ENCODE measurements at regions of chr9 and their contacts with region 1.

Region 1: DNA sequence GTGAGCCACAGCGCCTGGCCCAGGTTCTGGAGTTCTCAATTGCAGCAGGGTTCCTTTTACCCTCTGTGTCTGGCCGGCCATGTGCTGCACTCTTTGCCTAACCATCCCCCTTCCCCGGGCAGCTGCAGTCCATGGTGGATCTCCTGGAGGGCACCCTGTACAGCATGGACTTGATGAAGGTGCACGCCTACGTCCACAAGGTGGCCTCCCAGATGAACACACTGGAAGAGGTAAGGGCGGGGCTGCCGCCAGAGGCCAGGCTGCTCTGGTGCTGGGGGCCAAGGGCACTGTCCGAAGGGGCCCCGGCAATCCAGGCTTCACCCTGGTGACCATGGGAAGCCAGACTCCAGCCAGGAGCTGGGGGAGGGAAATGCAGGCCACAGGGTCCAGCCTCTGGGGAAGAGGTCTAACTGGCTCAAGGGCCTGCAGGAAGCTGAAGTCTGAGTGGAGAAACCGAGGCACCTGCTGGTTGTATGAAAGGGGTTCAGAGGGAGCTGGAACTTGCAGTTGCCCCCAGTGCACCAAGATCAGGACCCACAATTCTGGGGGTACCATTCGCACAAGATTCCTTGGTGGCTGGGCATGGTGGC is 18.1 kb downstream of the OLFML2A start:
- DNase-seq: no peak
- H3K4me3 ChIP-seq: no peak overlapping the region
- H3K27ac ChIP-seq: no peak overlapping the region
- H3K4me1 ChIP-seq: no peaks in the 10 kb centered on the region
- H3K27me3 ChIP-seq: no peaks in the 10 kb centered on the region
- CTCF ChIP-seq: no peak

Region 2: GRCh38 chr9:124617471-124618141 is 177.4 kb before region 1 on chr9:
- intact Hi-C with region 1: no loop called
- DNase-seq: peak in 1 of 2 donors; percentile 82
- H3K4me3 ChIP-seq: no peak overlapping the region
- H3K27ac ChIP-seq: no peak overlapping the region
- H3K4me1 ChIP-seq: no peaks in the 10 kb centered on the region
- H3K27me3 ChIP-seq: no peaks in the 10 kb centered on the region
- CTCF ChIP-seq: peak; percentile 78 to 84 (median 82)

Region 3: DNA sequence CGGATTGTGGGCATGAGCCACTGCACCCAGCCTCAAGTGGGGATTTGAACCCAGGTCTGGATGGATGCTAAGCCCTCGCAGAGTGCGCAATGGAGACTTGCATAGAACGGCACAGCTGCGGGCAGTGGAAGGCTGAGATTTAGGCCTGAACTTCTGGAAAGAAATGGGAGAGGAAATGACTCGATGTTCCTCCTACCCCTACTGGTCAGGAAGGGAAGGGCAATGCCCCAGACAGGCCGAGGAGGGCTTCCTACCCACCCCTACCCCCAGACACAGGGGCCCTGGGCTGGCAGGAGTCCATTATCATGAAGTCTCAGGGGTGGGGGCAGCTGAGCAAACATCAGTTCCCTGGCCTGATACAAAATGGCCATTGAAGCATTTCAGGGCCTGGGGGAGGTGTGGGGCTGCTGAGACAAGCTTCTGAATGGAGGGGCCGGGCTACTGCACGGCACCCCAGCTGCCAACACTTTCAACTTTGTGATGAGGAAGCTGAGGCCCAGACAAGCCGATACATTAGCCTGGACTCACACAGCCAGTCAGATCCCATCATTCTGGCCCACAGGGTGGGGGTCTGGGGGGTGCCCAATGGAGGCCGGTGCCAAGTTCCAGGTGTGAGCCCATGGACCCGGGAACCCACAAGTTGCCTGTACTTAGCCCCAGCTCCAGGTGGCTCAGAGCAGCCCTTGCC is 44.8 kb after region 1 on chr9:
- intact Hi-C with region 1: loop called (anchors 5 kb)
- DNase-seq: no peak
- H3K4me3 ChIP-seq: no peak overlapping the region
- H3K27ac ChIP-seq: no peak overlapping the region
- H3K4me1 ChIP-seq: no peaks in the 10 kb centered on the region
- H3K27me3 ChIP-seq: no peaks in the 10 kb centered on the region
- CTCF ChIP-seq: peak in 2 of 3 experiments; percentile 10 to 17

Region 4: GRCh38 chr9:126093771-126094170 is 1298.8 kb after region 1 on chr9:
- intact Hi-C with region 1: no loop called
- DNase-seq: no peak
- H3K4me3 ChIP-seq: no peak overlapping the region
- H3K27ac ChIP-seq: no peak overlapping the region
- H3K4me1 ChIP-seq: no peaks in the 10 kb centered on the region
- H3K27me3 ChIP-seq: no peaks in the 10 kb centered on the region
- CTCF ChIP-seq: no peak

Measured in ascending aorta (tissue), 2 donors.